ENCODE measurements at regions of chr22 and their contacts with region 1.

Region 1: DNA sequence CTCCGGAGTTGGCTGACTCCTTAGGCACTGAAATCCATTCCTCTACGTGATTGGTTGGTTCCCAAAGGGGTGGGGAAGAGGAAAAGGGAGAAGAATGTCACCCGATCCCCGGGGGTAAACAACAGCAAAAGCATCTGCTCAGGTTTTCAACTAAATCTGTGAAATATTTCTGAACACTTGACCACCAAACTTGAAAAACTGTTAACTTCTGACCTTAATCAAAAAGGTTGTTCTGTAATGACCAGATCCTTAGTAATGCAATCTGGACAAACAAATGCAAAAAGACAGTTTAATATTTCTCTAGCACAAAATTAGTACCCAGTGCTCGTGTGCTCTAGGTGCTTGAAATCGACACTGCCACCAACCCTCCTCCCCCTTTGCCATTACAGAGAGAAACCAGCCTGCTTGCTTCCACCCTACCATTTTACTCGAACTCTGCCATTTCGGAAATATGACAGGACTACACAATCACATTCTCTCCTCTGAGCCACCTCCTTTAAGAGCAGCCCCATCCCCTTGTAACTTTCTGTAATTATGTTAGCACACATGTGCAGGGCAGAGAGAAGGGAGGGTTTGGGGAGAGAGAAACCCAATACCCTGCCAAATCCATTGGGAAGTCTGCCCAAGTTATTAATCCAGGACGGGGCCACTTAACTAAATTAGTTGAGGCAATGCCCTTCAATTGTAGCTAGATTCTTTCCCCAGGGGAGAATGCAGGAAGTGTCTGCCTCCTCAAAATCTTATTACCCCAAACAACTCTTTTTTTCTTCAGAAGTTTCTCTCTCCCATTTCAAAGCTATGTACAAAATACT is 113.8 kb downstream of the RBFOX2 start:
- DNase-seq: peak in 1 of 2 donors; percentile 87
- ATAC-seq: peak; percentile 86 to 94 (median 92)
- H3K4me3 ChIP-seq: peak overlapping the region; percentile 12 to 55 (median 48)
- H3K27ac ChIP-seq: peak overlapping the region; percentile 75 to 93 (median 86)
- H3K4me1 ChIP-seq: peaks cover 9 to 99% (median 85%) of the 10 kb centered on the region in 9 donors
- H3K27me3 ChIP-seq: no peaks in the 10 kb centered on the region
- CTCF ChIP-seq: no peak

Region 2: DNA sequence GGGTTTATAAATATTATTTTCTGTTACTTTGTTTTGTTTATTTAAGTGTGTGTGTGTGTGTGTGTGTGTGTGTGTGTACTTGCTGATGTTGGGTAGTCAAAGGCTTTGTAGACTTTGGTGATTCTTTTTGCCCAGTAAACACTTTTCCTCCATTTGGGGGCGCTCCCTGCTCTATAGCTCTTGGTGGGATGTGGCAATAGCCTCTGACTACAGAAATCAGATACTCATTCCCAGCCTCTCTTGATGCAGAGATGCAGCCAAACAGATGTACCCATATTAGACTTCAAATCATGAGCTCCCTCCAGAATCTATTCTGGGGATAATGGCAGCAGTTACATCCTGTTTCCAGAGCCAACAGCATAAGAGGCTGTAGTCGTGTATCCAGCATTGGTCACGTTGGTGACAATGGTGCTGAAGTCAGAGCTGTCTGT is 230.6 kb before region 1 on chr22:
- intact Hi-C with region 1: loop called in 2 of 10 experiments (anchors 2 to 10 kb)
- DNase-seq: peak in 1 of 2 donors; percentile 28
- ATAC-seq: peak; percentile 67 to 96 (median 90)
- H3K4me3 ChIP-seq: no peak overlapping the region
- H3K27ac ChIP-seq: peak overlapping the region in 3 of 10 donors; percentile 5 to 31 (median 26)
- H3K4me1 ChIP-seq: peaks cover 0 to 12% (median 0%) of the 10 kb centered on the region in 9 donors
- H3K27me3 ChIP-seq: no peaks in the 10 kb centered on the region
- CTCF ChIP-seq: peak in 8 of 9 donors; percentile 5 to 47 (median 26)

Region 3: DNA sequence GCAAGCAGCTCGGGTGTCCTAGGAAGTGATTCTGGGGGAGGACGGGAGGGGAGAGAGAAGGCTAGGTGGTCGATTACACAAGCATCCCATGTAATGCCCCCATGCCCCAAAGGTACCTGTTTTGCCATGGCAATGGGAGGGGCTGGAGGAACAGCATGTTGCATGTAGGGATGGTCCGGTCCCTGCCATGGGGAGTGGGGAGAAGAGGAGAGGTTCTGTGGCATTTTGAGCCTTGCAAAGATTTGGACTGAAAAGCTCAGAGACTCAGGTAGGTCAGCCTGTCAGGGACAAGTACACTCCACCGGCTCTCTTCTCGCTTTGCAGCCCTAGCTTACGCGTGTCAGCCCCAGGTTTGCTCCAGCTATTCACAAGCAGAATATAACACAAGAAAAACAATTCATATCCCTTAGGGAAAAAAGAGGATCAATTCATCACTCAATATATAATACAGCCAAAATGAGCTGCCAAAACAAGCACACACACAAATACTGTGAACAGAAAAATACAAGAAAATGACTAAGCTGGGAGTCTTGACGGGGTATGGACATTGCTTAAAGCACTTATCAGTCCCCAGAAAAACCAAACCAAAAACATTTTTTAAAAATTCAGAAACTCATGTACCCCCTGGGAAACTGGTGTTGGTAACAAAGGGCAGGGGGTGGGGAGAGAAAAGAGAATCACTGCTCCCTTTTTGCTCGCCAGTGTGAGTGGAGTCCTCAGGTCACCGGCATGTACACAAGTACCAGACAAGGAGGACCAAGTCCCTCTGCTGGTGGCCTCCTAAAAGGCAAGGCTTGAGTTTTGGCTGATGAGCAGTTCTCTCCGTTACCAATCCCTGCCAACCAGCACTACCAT is 175.6 kb before region 1 on chr22:
- intact Hi-C with region 1: loop called in 2 of 10 experiments (anchors 5 kb)
- DNase-seq: no peak
- ATAC-seq: peak in 2 of 8 donors; percentile 31 to 40
- H3K4me3 ChIP-seq: no peak overlapping the region
- H3K27ac ChIP-seq: peak overlapping the region in 1 of 10 donors; percentile 9
- H3K4me1 ChIP-seq: peaks cover 0 to 53% (median 31%) of the 10 kb centered on the region in 9 donors
- H3K27me3 ChIP-seq: no peaks in the 10 kb centered on the region
- CTCF ChIP-seq: peak in 7 of 9 donors; percentile 19 to 53 (median 26)

Region 4: DNA sequence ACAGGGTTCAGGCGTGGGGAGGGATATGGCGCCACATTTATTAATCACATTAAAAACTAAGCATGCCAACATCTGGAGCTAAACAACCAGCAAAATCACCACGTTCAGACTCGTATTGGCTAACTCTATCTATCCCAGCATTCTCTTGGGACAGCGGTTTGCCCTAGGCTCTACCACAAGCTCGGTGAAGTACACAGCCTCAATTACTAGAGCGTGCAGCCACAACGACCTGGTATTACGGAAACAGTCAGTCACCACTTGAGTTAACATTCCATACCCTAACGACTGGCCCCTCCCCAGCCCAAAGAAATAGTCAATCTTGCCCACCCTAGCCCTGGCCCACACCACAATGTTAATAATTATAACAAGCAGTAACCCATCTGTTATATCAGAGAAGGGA is 165.1 kb before region 1 on chr22:
- intact Hi-C with region 1: loop called in 5 of 10 experiments (anchors 5 to 10 kb)
- DNase-seq: no peak
- ATAC-seq: no peak
- H3K4me3 ChIP-seq: no peak overlapping the region
- H3K27ac ChIP-seq: no peak overlapping the region
- H3K4me1 ChIP-seq: peaks cover 0 to 60% (median 42%) of the 10 kb centered on the region in 9 donors
- H3K27me3 ChIP-seq: no peaks in the 10 kb centered on the region
- CTCF ChIP-seq: no peak

Region 5: DNA sequence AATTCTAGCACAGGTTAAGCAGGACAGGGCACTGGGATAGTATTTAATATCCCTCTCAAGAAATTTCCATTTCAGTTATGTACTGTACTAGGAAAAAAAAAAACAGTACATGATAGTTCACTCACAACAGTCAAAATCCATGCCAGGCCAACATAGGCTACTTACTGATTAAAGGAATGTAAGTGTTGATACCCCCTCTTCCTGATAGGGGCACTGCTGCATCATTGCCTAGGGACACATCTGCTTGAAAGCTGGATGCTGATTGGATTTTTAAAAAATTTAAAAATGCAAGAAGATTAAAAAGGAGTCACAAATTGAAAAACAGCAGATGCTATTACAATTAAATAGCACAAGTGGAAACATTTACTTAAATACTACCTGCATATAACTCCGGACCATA is 153.8 kb before region 1 on chr22:
- intact Hi-C with region 1: loop called in 8 of 10 experiments (anchors 5 to 10 kb)
- DNase-seq: no peak
- ATAC-seq: peak in 3 of 8 donors; percentile 52 to 76 (median 56)
- H3K4me3 ChIP-seq: no peak overlapping the region
- H3K27ac ChIP-seq: peak overlapping the region in 1 of 10 donors; percentile 17
- H3K4me1 ChIP-seq: peaks cover 0 to 22% (median 6%) of the 10 kb centered on the region in 9 donors
- H3K27me3 ChIP-seq: no peaks in the 10 kb centered on the region
- CTCF ChIP-seq: peak in 7 of 9 donors; percentile 17 to 54 (median 37)

Region 6: DNA sequence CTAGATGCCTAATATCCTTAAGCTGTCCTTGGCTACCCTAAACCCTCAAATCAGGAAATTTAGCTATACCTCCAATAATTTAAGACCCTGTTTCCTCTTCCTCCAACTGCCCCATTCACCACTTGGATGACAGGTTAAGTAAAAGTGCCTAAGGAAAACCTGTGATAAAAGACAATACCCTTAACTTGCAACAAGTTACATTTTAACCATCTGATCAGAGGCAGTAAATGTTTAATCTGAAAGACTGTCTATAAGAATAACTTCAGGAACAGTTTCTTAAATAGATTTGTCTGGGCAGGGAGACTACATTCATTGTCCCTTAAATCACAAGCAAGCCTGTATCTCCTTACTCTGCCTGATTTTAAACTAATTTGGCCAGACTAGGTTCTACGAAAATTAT is 68.1 kb before region 1 on chr22:
- intact Hi-C with region 1: loop called in 4 of 10 experiments (anchors 2 to 10 kb)
- DNase-seq: no peak
- ATAC-seq: no peak
- H3K4me3 ChIP-seq: no peak overlapping the region
- H3K27ac ChIP-seq: peak overlapping the region in 1 of 10 donors; percentile 8
- H3K4me1 ChIP-seq: peaks cover 0 to 69% (median 31%) of the 10 kb centered on the region in 9 donors
- H3K27me3 ChIP-seq: no peaks in the 10 kb centered on the region
- CTCF ChIP-seq: no peak

Region 7: DNA sequence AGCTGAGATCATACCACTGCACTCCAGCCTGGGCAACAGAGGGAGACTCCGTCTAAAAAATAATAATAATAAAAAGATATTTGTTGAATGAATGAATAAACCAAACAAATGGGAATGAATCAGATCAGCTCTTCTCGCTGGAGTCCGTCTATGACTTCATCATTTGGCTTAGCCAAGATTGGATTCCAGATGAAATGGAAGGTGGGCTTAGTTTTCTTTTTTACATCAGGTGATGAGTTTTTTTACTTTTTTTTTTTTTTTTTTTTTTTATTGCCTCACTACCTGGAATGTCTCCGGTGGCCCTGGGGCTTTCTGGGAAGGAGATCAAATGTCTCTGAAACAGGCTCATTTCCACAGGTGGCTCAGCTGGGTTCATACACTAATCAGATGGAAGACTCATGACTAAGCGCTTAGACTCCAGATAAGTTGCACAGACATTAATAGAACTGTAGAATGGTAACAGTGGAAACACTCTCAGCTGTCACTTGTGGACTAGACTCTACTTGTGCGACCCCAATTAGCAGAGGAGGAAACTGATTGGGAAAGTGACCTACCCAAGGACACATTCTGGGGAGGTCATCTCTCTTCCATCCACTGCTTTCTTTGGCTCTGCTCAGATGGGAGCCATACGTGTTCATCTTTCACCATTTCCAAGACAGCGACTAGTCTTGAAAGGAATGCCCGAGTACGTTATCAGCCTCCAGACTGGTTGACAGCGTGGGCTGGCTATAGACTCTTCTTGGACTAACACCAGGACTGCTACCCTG is 134.2 kb after region 1 on chr22:
- intact Hi-C with region 1: no loop called
- DNase-seq: no peak
- ATAC-seq: no peak
- H3K4me3 ChIP-seq: no peak overlapping the region
- H3K27ac ChIP-seq: no peak overlapping the region
- H3K4me1 ChIP-seq: no peaks in the 10 kb centered on the region
- H3K27me3 ChIP-seq: no peaks in the 10 kb centered on the region
- CTCF ChIP-seq: no peak

Measured in heart right ventricle (tissue), 16 donors.